Naive thymus-derived CD4-positive, alpha-beta T cell (primary cell): ENCODE measurements at regions of chr10 and their contacts with region 1.

Region 1: GRCh38 chr10:23158370-23158769 is 33.7 kb upstream of the PTF1A start:
- DNase-seq: peak in 7 of 9 donors; percentile 10 to 37 (median 30)
- ATAC-seq: peak; percentile 63
- H3K4me3 ChIP-seq: no peak overlapping the region
- H3K4me3 Mint-ChIP-seq: peak overlapping the region in 2 of 10 donors; percentile 24 to 30
- H3K27ac ChIP-seq: no peak overlapping the region
- H3K27ac Mint-ChIP-seq: no peak overlapping the region
- H3K4me1 ChIP-seq: no peaks in the 10 kb centered on the region
- H3K4me1 Mint-ChIP-seq: peaks cover 0 to 22% (median 0%) of the 10 kb centered on the region in 7 donors
- H3K27me3 ChIP-seq: no peaks in the 10 kb centered on the region
- H3K27me3 Mint-ChIP-seq: peaks cover 16 to 44% (median 34%) of the 10 kb centered on the region in 5 donors

Region 2: GRCh38 chr10:23139677-23140076 is 18.7 kb before region 1 on chr10:
- CTCF ChIA-PET with region 1: no interaction called
- POLR2A ChIA-PET with region 1: no interaction called
- intact Hi-C with region 1: no loop called
- DNase-seq: no peak
- ATAC-seq: no peak
- H3K4me3 ChIP-seq: no peak overlapping the region
- H3K4me3 Mint-ChIP-seq: no peak overlapping the region
- H3K27ac ChIP-seq: no peak overlapping the region
- H3K27ac Mint-ChIP-seq: no peak overlapping the region
- H3K4me1 ChIP-seq: no peaks in the 10 kb centered on the region
- H3K4me1 Mint-ChIP-seq: no peaks in the 10 kb centered on the region
- H3K27me3 ChIP-seq: no peaks in the 10 kb centered on the region
- H3K27me3 Mint-ChIP-seq: peaks cover 0 to 15% (median 8%) of the 10 kb centered on the region in 5 donors

Region 3: DNA sequence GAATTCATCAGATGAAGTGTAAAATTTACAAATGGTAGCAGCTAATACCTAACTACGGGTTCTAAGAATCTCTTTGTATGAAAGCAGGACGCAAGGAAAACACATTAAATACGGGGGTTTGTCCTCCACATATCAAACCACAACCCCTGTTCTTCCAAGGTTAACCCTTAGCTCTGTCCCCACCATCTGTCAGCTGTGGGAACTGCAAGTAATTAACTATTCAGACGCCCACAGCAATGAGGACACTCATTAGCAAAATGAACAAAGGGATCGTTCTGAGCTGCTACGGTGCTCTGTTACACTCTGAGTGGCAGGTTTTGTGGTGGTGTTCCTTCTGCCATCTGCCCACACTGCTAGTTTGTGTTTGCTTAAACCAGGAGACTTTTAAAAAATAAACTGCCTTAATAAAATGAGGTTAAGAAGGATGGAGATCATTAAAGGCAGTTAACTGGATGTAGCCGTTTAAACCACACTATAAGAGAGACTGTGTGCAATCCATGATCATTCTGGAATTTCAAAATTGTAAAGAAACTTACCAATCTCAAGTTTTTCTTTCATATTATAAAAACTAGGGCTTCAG is 134.9 kb after region 1 on chr10:
- CTCF ChIA-PET with region 1: interaction called, 9 read pairs
- POLR2A ChIA-PET with region 1: no interaction called
- intact Hi-C with region 1: loop called (anchors 1 to 2 kb)
- DNase-seq: peak in 5 of 9 donors; percentile 8 to 22 (median 16)
- ATAC-seq: peak; percentile 65
- H3K4me3 ChIP-seq: no peak overlapping the region
- H3K4me3 Mint-ChIP-seq: no peak overlapping the region
- H3K27ac ChIP-seq: no peak overlapping the region
- H3K27ac Mint-ChIP-seq: no peak overlapping the region
- H3K4me1 ChIP-seq: no peaks in the 10 kb centered on the region
- H3K4me1 Mint-ChIP-seq: peaks cover 0 to 2% (median 0%) of the 10 kb centered on the region in 7 donors
- H3K27me3 ChIP-seq: peaks cover 0 to 6% of the 10 kb centered on the region in 2 donors
- H3K27me3 Mint-ChIP-seq: peaks cover 16 to 32% (median 20%) of the 10 kb centered on the region in 5 donors

Region 4: DNA sequence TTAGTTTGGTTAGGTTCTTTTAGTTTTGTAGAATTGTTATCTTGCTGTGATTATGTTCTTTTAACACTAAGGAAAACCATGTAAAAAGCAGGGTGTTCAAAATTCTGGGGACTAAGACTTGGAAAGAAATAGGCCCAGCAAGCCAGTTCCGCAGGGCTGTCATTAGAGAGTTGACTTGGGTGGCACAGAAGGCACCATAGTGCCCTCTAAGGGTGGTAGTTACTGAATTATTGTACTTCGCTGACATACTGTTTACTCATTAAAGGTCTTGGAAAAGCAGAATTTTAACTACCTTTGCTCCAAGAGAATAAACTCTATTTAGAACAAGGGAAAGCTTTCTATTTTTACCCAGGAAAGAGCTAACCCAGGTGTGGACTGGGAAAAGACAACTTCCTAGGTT is 367.0 kb after region 1 on chr10:
- CTCF ChIA-PET with region 1: no interaction called
- POLR2A ChIA-PET with region 1: no interaction called
- intact Hi-C with region 1: loop called in 1 of 2 experiments (anchors 2 kb)
- DNase-seq: peak in 1 of 9 donors; percentile 15
- ATAC-seq: peak; percentile 50
- H3K4me3 ChIP-seq: no peak overlapping the region
- H3K4me3 Mint-ChIP-seq: no peak overlapping the region
- H3K27ac ChIP-seq: no peak overlapping the region
- H3K27ac Mint-ChIP-seq: peak overlapping the region in 1 of 9 donors; percentile 72
- H3K4me1 ChIP-seq: no peaks in the 10 kb centered on the region
- H3K4me1 Mint-ChIP-seq: peaks cover 0 to 5% (median 0%) of the 10 kb centered on the region in 7 donors
- H3K27me3 ChIP-seq: no peaks in the 10 kb centered on the region
- H3K27me3 Mint-ChIP-seq: peaks cover 0 to 7% (median 6%) of the 10 kb centered on the region in 5 donors

Region 5: GRCh38 chr10:23656735-23657134 is 498.4 kb after region 1 on chr10:
- CTCF ChIA-PET with region 1: no interaction called
- POLR2A ChIA-PET with region 1: no interaction called
- intact Hi-C with region 1: loop called in 1 of 2 experiments (anchors 1 kb)
- DNase-seq: peak in 5 of 9 donors; percentile 4 to 40 (median 37)
- ATAC-seq: no peak
- H3K4me3 ChIP-seq: no peak overlapping the region
- H3K4me3 Mint-ChIP-seq: no peak overlapping the region
- H3K27ac ChIP-seq: no peak overlapping the region
- H3K27ac Mint-ChIP-seq: peak overlapping the region in 1 of 9 donors; percentile 16
- H3K4me1 ChIP-seq: no peaks in the 10 kb centered on the region
- H3K4me1 Mint-ChIP-seq: peaks cover 0 to 2% (median 0%) of the 10 kb centered on the region in 7 donors
- H3K27me3 ChIP-seq: no peaks in the 10 kb centered on the region
- H3K27me3 Mint-ChIP-seq: peaks cover 0 to 14% (median 9%) of the 10 kb centered on the region in 5 donors

Region 6: DNA sequence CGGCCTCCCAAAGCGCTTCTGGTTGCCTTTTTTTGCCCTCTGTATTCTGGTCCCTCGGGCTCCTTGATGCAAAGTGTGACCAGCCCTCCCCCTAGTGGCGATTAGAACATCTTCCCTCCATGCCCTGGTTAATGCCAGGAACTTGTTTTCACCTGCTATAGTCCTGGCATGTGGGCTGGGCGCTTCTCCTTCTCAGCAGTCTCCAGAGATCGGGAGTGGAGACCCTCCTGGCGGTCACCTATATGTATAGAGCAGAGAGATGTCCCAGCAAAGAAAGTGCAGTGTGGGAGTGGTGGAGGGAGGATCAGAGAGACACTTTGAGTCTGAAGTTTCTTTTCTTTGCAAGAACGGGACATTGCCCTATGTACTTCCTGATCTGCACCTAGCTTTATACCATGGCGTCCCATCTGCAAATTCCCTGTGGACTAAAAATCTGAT is 544.6 kb after region 1 on chr10:
- CTCF ChIA-PET with region 1: interaction called, 3 read pairs
- POLR2A ChIA-PET with region 1: no interaction called
- intact Hi-C with region 1: loop called in 1 of 2 experiments (anchors 2 kb)
- DNase-seq: peak in 7 of 9 donors; percentile 39 to 68 (median 61)
- ATAC-seq: peak; percentile 78
- H3K4me3 ChIP-seq: no peak overlapping the region
- H3K4me3 Mint-ChIP-seq: peak overlapping the region in 8 of 10 donors; percentile 7 to 62 (median 50)
- H3K27ac ChIP-seq: no peak overlapping the region
- H3K27ac Mint-ChIP-seq: peak overlapping the region in 1 of 9 donors; percentile 47
- H3K4me1 ChIP-seq: no peaks in the 10 kb centered on the region
- H3K4me1 Mint-ChIP-seq: peaks cover 3 to 15% (median 12%) of the 10 kb centered on the region in 7 donors
- H3K27me3 ChIP-seq: peaks cover 0 to 4% of the 10 kb centered on the region in 2 donors
- H3K27me3 Mint-ChIP-seq: peaks cover 22 to 40% (median 26%) of the 10 kb centered on the region in 5 donors

Region 7: DNA sequence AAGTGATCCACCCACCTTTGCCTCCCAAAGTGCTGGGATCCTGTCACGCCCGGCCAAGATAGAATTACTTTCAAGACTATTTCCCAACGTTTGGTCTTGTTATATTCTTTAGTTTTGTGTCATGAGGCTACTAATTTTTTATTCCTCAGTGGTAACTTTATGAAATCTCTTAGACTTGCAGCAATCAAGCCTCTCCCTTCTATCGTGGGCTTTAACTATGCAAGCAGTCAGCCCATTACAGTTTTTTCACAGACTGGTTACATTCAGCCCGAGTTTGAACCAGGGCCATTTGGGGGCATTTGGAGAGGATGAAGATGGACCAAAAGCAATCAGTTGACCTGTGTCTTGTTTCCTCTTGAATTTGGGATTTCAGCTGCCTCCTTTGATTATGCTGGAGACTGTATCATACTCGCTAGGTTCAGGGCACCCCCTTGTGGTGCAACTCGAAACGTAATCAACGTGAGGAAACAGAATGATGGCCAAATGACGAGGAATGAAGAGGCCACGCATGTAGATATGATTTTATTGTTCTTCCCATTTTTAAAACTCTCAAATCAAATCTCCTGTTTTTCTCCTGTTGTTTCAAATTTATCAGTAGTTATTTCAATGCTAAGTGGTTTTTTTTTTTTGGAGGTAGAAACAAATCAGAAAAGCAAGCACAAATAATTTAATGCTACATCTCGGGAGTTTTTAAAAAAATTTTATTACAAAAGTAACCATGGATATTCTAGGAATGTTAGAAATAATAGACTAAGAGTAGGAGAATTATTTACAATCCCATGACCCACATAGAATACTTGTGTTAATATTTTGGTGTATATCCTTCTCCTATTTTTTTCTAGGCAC is 1202.1 kb after region 1 on chr10:
- CTCF ChIA-PET with region 1: no interaction called
- POLR2A ChIA-PET with region 1: no interaction called
- intact Hi-C with region 1: loop called in 1 of 2 experiments (anchors 2 kb)
- DNase-seq: peak in 1 of 9 donors; percentile 32
- ATAC-seq: no peak
- H3K4me3 ChIP-seq: no peak overlapping the region
- H3K4me3 Mint-ChIP-seq: no peak overlapping the region
- H3K27ac ChIP-seq: no peak overlapping the region
- H3K27ac Mint-ChIP-seq: peak overlapping the region in 1 of 9 donors; percentile 32
- H3K4me1 ChIP-seq: no peaks in the 10 kb centered on the region
- H3K4me1 Mint-ChIP-seq: no peaks in the 10 kb centered on the region
- H3K27me3 ChIP-seq: no peaks in the 10 kb centered on the region
- H3K27me3 Mint-ChIP-seq: peaks cover 0 to 19% (median 7%) of the 10 kb centered on the region in 5 donors

Region 8: GRCh38 chr10:24518981-24519597 is 1360.7 kb after region 1 on chr10:
- CTCF ChIA-PET with region 1: no interaction called
- POLR2A ChIA-PET with region 1: no interaction called
- intact Hi-C with region 1: loop called in 1 of 2 experiments (anchors 2 kb)
- DNase-seq: peak in 4 of 9 donors; percentile 5 to 42 (median 12)
- ATAC-seq: no peak
- H3K4me3 ChIP-seq: peak overlapping the region; percentile 38
- H3K4me3 Mint-ChIP-seq: peak overlapping the region; percentile 6 to 84 (median 77)
- H3K27ac ChIP-seq: no peak overlapping the region
- H3K27ac Mint-ChIP-seq: peak overlapping the region in 4 of 9 donors; percentile 7 to 90 (median 20)
- H3K4me1 ChIP-seq: no peaks in the 10 kb centered on the region
- H3K4me1 Mint-ChIP-seq: peaks cover 6 to 16% (median 14%) of the 10 kb centered on the region in 7 donors
- H3K27me3 ChIP-seq: no peaks in the 10 kb centered on the region
- H3K27me3 Mint-ChIP-seq: peaks cover 0 to 13% (median 0%) of the 10 kb centered on the region in 5 donors